Esophagus squamous epithelium (tissue), 5 donors: ENCODE measurements at regions of chr5 and their contacts with region 1.

Region 1: GRCh38 chr5:16791036-16791705 is 144.9 kb downstream of the MYO10 start:
- DNase-seq: no peak
- H3K4me3 ChIP-seq: no peak overlapping the region
- H3K27ac ChIP-seq: no peak overlapping the region
- H3K4me1 ChIP-seq: peaks cover 0 to 12% (median 0%) of the 10 kb centered on the region in 3 donors
- H3K27me3 ChIP-seq: no peaks in the 10 kb centered on the region
- CTCF ChIP-seq: peak; percentile 60 to 81 (median 69)
- POLR2A ChIP-seq: no peak

Region 2: GRCh38 chr5:16957304-16958196 is 166.4 kb after region 1 on chr5:
- intact Hi-C with region 1: no loop called
- DNase-seq: no peak
- H3K4me3 ChIP-seq: no peak overlapping the region
- H3K27ac ChIP-seq: no peak overlapping the region
- H3K4me1 ChIP-seq: no peaks in the 10 kb centered on the region
- H3K27me3 ChIP-seq: no peaks in the 10 kb centered on the region
- CTCF ChIP-seq: no peak
- POLR2A ChIP-seq: no peak

Region 3: GRCh38 chr5:17132444-17133083 is 341.4 kb after region 1 on chr5:
- intact Hi-C with region 1: loop called (anchors 10 kb)
- DNase-seq: no peak
- H3K4me3 ChIP-seq: no peak overlapping the region
- H3K27ac ChIP-seq: no peak overlapping the region
- H3K4me1 ChIP-seq: no peaks in the 10 kb centered on the region
- H3K27me3 ChIP-seq: peaks cover 0 to 12% (median 0%) of the 10 kb centered on the region in 4 donors
- CTCF ChIP-seq: peak; percentile 12 to 73 (median 56)
- POLR2A ChIP-seq: no peak

Region 4: GRCh38 chr5:17189381-17190036 is 398.3 kb after region 1 on chr5:
- intact Hi-C with region 1: loop called (anchors 5 kb)
- DNase-seq: no peak
- H3K4me3 ChIP-seq: no peak overlapping the region
- H3K27ac ChIP-seq: peak overlapping the region in 1 of 4 donors; percentile 36
- H3K4me1 ChIP-seq: peaks cover 0 to 46% (median 6%) of the 10 kb centered on the region in 3 donors
- H3K27me3 ChIP-seq: peaks cover 0 to 5% (median 0%) of the 10 kb centered on the region in 4 donors
- CTCF ChIP-seq: peak; percentile 66 to 84 (median 70)
- POLR2A ChIP-seq: no peak